Caco-2 (cell line): ENCODE measurements at regions of chr7 and their contacts with region 1.

Region 1: GRCh38 chr7:93245525-93246432 is 13.6 kb downstream of the VPS50 start:
- DNase-seq: peak in 1 of 2 experiments; percentile 24
- H3K4me3 ChIP-seq: no peak overlapping the region
- H3K4me3 Mint-ChIP-seq: no peak overlapping the region
- H3K27ac Mint-ChIP-seq: no peak overlapping the region
- H3K4me1 ChIP-seq: peaks cover 10% of the 10 kb centered on the region; the same call in 1 of the 2 replicates
- H3K4me1 Mint-ChIP-seq: peaks cover 21% of the 10 kb centered on the region
- H3K27me3 ChIP-seq: no peaks in the 10 kb centered on the region
- H3K27me3 Mint-ChIP-seq: no peaks in the 10 kb centered on the region
- CTCF ChIP-seq: peak in 1 of 2 experiments; percentile 51

Region 2: GRCh38 chr7:93108003-93108402 is 137.8 kb before region 1 on chr7:
- CTCF ChIA-PET with region 1: no interaction called
- POLR2A ChIA-PET with region 1: no interaction called
- intact Hi-C with region 1: no loop called
- DNase-seq: no peak
- H3K4me3 ChIP-seq: no peak overlapping the region
- H3K4me3 Mint-ChIP-seq: no peak overlapping the region
- H3K27ac Mint-ChIP-seq: no peak overlapping the region
- H3K4me1 ChIP-seq: no peaks in the 10 kb centered on the region
- H3K4me1 Mint-ChIP-seq: no peaks in the 10 kb centered on the region
- H3K27me3 ChIP-seq: no peaks in the 10 kb centered on the region; the same call in 1 of the 2 replicates
- H3K27me3 Mint-ChIP-seq: peaks cover 12% of the 10 kb centered on the region
- CTCF ChIP-seq: no peak

Region 3: DNA sequence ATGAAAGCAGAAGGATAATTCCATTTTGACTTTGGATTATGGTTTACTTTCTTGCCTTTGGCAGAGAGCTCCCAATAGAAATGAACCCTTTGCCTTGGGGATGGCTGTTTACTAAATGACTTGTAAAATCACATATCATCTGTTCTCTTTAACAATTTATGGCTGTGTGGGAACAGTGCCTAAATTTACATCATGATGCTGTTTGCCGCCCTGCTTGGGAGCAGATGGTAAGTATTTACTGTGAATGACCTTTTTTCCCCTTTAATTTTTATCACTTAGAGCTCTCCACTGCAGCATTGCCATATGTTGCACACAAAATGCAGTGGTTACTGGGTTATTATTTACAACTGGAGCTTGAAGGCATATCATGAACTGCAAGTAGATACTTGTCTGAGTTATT is 32.9 kb before region 1 on chr7:
- CTCF ChIA-PET with region 1: no interaction called
- POLR2A ChIA-PET with region 1: no interaction called
- intact Hi-C with region 1: no loop called
- DNase-seq: no peak
- H3K4me3 ChIP-seq: no peak overlapping the region
- H3K4me3 Mint-ChIP-seq: no peak overlapping the region
- H3K27ac Mint-ChIP-seq: no peak overlapping the region
- H3K4me1 ChIP-seq: peaks cover 34% of the 10 kb centered on the region
- H3K4me1 Mint-ChIP-seq: peaks cover 21% of the 10 kb centered on the region
- H3K27me3 ChIP-seq: no peaks in the 10 kb centered on the region
- H3K27me3 Mint-ChIP-seq: no peaks in the 10 kb centered on the region
- CTCF ChIP-seq: no peak

Region 4: DNA sequence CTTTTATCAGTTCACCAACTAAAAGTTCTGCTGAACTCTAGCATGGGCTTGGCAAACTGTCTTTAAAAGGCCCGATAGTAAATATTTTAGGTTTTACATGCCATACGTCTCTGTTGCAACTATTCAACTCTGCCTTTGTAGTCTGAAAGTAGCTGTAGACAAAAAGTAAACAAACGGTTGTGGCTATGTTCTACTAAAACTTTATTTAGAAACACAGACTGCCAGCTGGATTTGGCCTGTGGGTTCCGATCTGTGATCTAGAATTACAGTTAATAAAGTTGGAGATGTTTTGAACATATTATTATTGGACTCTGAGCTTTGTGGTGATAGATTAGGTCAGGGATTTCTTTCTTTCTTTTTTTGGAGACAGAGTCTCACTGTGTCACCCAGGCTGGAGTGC is 19.4 kb after region 1 on chr7:
- CTCF ChIA-PET with region 1: no interaction called
- POLR2A ChIA-PET with region 1: no interaction called
- intact Hi-C with region 1: loop called (anchors 2 kb)
- DNase-seq: no peak
- H3K4me3 ChIP-seq: no peak overlapping the region
- H3K4me3 Mint-ChIP-seq: no peak overlapping the region
- H3K27ac Mint-ChIP-seq: peak overlapping the region; percentile 63
- H3K4me1 ChIP-seq: peaks cover 29% of the 10 kb centered on the region
- H3K4me1 Mint-ChIP-seq: peaks cover 52% of the 10 kb centered on the region
- H3K27me3 ChIP-seq: no peaks in the 10 kb centered on the region
- H3K27me3 Mint-ChIP-seq: no peaks in the 10 kb centered on the region
- CTCF ChIP-seq: no peak

Region 5: GRCh38 chr7:93374345-93374940 is 128.7 kb after region 1 on chr7:
- CTCF ChIA-PET with region 1: interaction called, 7 read pairs
- POLR2A ChIA-PET with region 1: no interaction called
- intact Hi-C with region 1: loop called (anchors 1 kb)
- DNase-seq: peak in 1 of 2 experiments; percentile 32
- H3K4me3 ChIP-seq: no peak overlapping the region
- H3K4me3 Mint-ChIP-seq: no peak overlapping the region
- H3K27ac Mint-ChIP-seq: no peak overlapping the region
- H3K4me1 ChIP-seq: no peaks in the 10 kb centered on the region; the same call in 1 of the 2 replicates
- H3K4me1 Mint-ChIP-seq: no peaks in the 10 kb centered on the region
- H3K27me3 ChIP-seq: no peaks in the 10 kb centered on the region
- H3K27me3 Mint-ChIP-seq: peaks cover 2% of the 10 kb centered on the region
- CTCF ChIP-seq: peak; percentile 79 to 82

Region 6: GRCh38 chr7:93442478-93443224 is 196.9 kb after region 1 on chr7:
- CTCF ChIA-PET with region 1: no interaction called
- POLR2A ChIA-PET with region 1: no interaction called
- intact Hi-C with region 1: loop called (anchors 5 kb)
- DNase-seq: peak; percentile 48 to 66
- H3K4me3 ChIP-seq: no peak overlapping the region
- H3K4me3 Mint-ChIP-seq: no peak overlapping the region
- H3K27ac Mint-ChIP-seq: no peak overlapping the region
- H3K4me1 ChIP-seq: no peaks in the 10 kb centered on the region
- H3K4me1 Mint-ChIP-seq: no peaks in the 10 kb centered on the region
- H3K27me3 ChIP-seq: no peaks in the 10 kb centered on the region; the same call in 1 of the 2 replicates
- H3K27me3 Mint-ChIP-seq: peaks cover 21% of the 10 kb centered on the region
- CTCF ChIP-seq: peak; percentile 74 to 87

Region 7: GRCh38 chr7:93515144-93515543 is 269.4 kb after region 1 on chr7:
- CTCF ChIA-PET with region 1: no interaction called
- POLR2A ChIA-PET with region 1: no interaction called
- intact Hi-C with region 1: loop called (anchors 1 kb)
- DNase-seq: no peak
- H3K4me3 ChIP-seq: no peak overlapping the region
- H3K4me3 Mint-ChIP-seq: no peak overlapping the region
- H3K27ac Mint-ChIP-seq: no peak overlapping the region
- H3K4me1 ChIP-seq: no peaks in the 10 kb centered on the region
- H3K4me1 Mint-ChIP-seq: no peaks in the 10 kb centered on the region
- H3K27me3 ChIP-seq: no peaks in the 10 kb centered on the region
- H3K27me3 Mint-ChIP-seq: peaks cover 3% of the 10 kb centered on the region
- CTCF ChIP-seq: no peak

Region 8: DNA sequence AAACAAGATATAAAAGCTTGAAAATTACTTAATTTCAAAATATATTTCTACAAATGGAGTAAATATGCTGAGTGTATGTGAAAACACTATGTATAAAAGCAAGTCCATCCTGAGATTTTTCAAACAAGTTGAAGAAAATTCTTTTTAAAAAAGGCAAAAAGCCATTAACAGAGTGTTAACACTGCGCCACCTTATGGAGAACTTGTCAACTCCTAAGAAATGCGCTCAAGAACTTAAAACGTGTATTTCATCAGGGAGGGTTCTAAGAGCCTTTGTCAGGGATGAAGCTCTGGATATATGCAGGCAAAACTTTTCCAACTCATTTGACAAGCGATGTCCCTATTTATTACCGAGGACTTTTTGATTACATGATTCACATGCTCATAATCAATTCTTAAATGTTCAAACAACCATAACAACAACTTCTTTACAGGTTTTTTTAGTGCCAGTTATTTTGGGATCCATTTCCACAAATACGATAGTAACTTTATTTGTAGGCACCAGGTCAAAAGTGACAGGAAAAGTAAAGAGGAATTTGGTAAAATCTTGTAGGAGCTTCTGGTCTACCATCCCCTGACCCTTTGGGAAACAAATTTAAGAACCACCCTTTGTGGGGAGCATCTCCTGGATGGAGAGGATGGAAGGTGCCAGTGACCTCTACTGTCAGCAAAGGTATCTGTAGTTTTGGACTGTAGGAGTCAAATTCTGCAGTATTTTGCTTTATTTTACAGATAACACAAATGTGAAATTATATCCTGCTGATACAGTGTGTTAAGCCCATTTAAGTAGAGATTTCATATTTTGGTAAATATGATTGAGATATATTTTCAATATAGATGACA is 305.5 kb after region 1 on chr7:
- CTCF ChIA-PET with region 1: interaction called, 5 read pairs
- POLR2A ChIA-PET with region 1: no interaction called
- intact Hi-C with region 1: loop called (anchors 1 kb)
- DNase-seq: peak in 1 of 2 experiments; percentile 36
- H3K4me3 ChIP-seq: no peak overlapping the region
- H3K4me3 Mint-ChIP-seq: no peak overlapping the region
- H3K27ac Mint-ChIP-seq: no peak overlapping the region
- H3K4me1 ChIP-seq: no peaks in the 10 kb centered on the region
- H3K4me1 Mint-ChIP-seq: no peaks in the 10 kb centered on the region
- H3K27me3 ChIP-seq: no peaks in the 10 kb centered on the region
- H3K27me3 Mint-ChIP-seq: peaks cover 8% of the 10 kb centered on the region
- CTCF ChIP-seq: peak; percentile 45 to 70

Region 9: GRCh38 chr7:93622036-93623033 is 376.6 kb after region 1 on chr7:
- CTCF ChIA-PET with region 1: no interaction called
- POLR2A ChIA-PET with region 1: no interaction called
- intact Hi-C with region 1: loop called (anchors 10 kb)
- DNase-seq: peak; percentile 40 to 42
- H3K4me3 ChIP-seq: no peak overlapping the region
- H3K4me3 Mint-ChIP-seq: no peak overlapping the region
- H3K27ac Mint-ChIP-seq: no peak overlapping the region
- H3K4me1 ChIP-seq: no peaks in the 10 kb centered on the region
- H3K4me1 Mint-ChIP-seq: peaks cover 6% of the 10 kb centered on the region
- H3K27me3 ChIP-seq: no peaks in the 10 kb centered on the region
- H3K27me3 Mint-ChIP-seq: no peaks in the 10 kb centered on the region
- CTCF ChIP-seq: peak; percentile 54 to 71